CD4-positive, alpha-beta memory T cell (primary cell): ENCODE measurements at regions of chr18 and their contacts with region 1.

Region 1: GRCh38 chr18:23032030-23032582 is 99.0 kb downstream of the RBBP8 start:
- DNase-seq: no peak
- H3K4me3 ChIP-seq: no peak overlapping the region
- H3K4me3 Mint-ChIP-seq: no peak overlapping the region
- H3K27ac ChIP-seq: no peak overlapping the region
- H3K27ac Mint-ChIP-seq: no peak overlapping the region
- H3K4me1 ChIP-seq: no peaks in the 10 kb centered on the region
- H3K4me1 Mint-ChIP-seq: peaks cover 0 to 3% (median 0%) of the 10 kb centered on the region in 4 donors
- H3K27me3 ChIP-seq: no peaks in the 10 kb centered on the region
- H3K27me3 Mint-ChIP-seq: no peaks in the 10 kb centered on the region

Region 2: DNA sequence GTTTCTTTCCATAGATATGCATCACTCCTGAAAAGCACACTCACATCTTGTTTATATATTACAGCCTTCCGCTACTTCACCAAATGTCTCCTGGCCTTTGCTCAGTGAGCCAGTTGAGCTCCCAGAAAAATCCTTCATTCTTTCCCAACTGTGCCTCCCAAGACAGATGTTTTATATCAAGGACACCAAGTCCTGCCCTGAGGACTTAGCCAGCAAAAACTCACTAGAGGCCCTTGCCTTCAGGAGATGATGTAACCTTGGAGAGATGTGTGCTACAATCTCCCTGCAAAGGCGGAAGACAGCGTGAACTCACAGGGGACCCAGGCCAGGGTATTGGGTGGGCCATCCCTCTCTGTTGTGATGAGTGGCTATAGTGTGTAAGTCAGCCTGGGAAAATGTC is 528.3 kb before region 1 on chr18:
- CTCF ChIA-PET with region 1: no interaction called
- POLR2A ChIA-PET with region 1: no interaction called
- intact Hi-C with region 1: no loop called
- DNase-seq: no peak
- H3K4me3 ChIP-seq: no peak overlapping the region
- H3K4me3 Mint-ChIP-seq: no peak overlapping the region
- H3K27ac ChIP-seq: no peak overlapping the region
- H3K27ac Mint-ChIP-seq: no peak overlapping the region
- H3K4me1 ChIP-seq: no peaks in the 10 kb centered on the region
- H3K4me1 Mint-ChIP-seq: no peaks in the 10 kb centered on the region
- H3K27me3 ChIP-seq: no peaks in the 10 kb centered on the region
- H3K27me3 Mint-ChIP-seq: no peaks in the 10 kb centered on the region

Region 3: GRCh38 chr18:23356915-23357601 is 325.0 kb after region 1 on chr18:
- CTCF ChIA-PET with region 1: interaction called, 25 read pairs
- POLR2A ChIA-PET with region 1: no interaction called
- intact Hi-C with region 1: loop called (anchors 5 kb)
- DNase-seq: no peak
- H3K4me3 ChIP-seq: no peak overlapping the region
- H3K4me3 Mint-ChIP-seq: no peak overlapping the region
- H3K27ac ChIP-seq: no peak overlapping the region
- H3K27ac Mint-ChIP-seq: no peak overlapping the region
- H3K4me1 ChIP-seq: peaks cover 12% of the 10 kb centered on the region
- H3K4me1 Mint-ChIP-seq: peaks cover 4 to 15% (median 10%) of the 10 kb centered on the region in 4 donors
- H3K27me3 ChIP-seq: no peaks in the 10 kb centered on the region
- H3K27me3 Mint-ChIP-seq: no peaks in the 10 kb centered on the region

Region 4: GRCh38 chr18:23377669-23378301 is 345.7 kb after region 1 on chr18:
- CTCF ChIA-PET with region 1: interaction called, 24 read pairs
- POLR2A ChIA-PET with region 1: no interaction called
- intact Hi-C with region 1: loop called (anchors 2 kb)
- DNase-seq: no peak
- H3K4me3 ChIP-seq: no peak overlapping the region
- H3K4me3 Mint-ChIP-seq: no peak overlapping the region
- H3K27ac ChIP-seq: no peak overlapping the region
- H3K27ac Mint-ChIP-seq: no peak overlapping the region
- H3K4me1 ChIP-seq: no peaks in the 10 kb centered on the region
- H3K4me1 Mint-ChIP-seq: peaks cover 0 to 2% (median 0%) of the 10 kb centered on the region in 4 donors
- H3K27me3 ChIP-seq: no peaks in the 10 kb centered on the region
- H3K27me3 Mint-ChIP-seq: no peaks in the 10 kb centered on the region

Region 5: GRCh38 chr18:23412351-23412964 is 380.4 kb after region 1 on chr18:
- CTCF ChIA-PET with region 1: interaction called, 53 read pairs
- POLR2A ChIA-PET with region 1: no interaction called
- intact Hi-C with region 1: loop called (anchors 1 kb)
- DNase-seq: no peak
- H3K4me3 ChIP-seq: no peak overlapping the region
- H3K4me3 Mint-ChIP-seq: no peak overlapping the region
- H3K27ac ChIP-seq: no peak overlapping the region
- H3K27ac Mint-ChIP-seq: no peak overlapping the region
- H3K4me1 ChIP-seq: no peaks in the 10 kb centered on the region
- H3K4me1 Mint-ChIP-seq: peaks cover 0 to 1% (median 0%) of the 10 kb centered on the region in 4 donors
- H3K27me3 ChIP-seq: no peaks in the 10 kb centered on the region
- H3K27me3 Mint-ChIP-seq: no peaks in the 10 kb centered on the region

Region 6: GRCh38 chr18:23422672-23423418 is 390.7 kb after region 1 on chr18:
- CTCF ChIA-PET with region 1: no interaction called
- POLR2A ChIA-PET with region 1: no interaction called
- intact Hi-C with region 1: no loop called
- DNase-seq: no peak
- H3K4me3 ChIP-seq: no peak overlapping the region
- H3K4me3 Mint-ChIP-seq: no peak overlapping the region
- H3K27ac ChIP-seq: no peak overlapping the region
- H3K27ac Mint-ChIP-seq: no peak overlapping the region
- H3K4me1 ChIP-seq: no peaks in the 10 kb centered on the region
- H3K4me1 Mint-ChIP-seq: no peaks in the 10 kb centered on the region
- H3K27me3 ChIP-seq: no peaks in the 10 kb centered on the region
- H3K27me3 Mint-ChIP-seq: no peaks in the 10 kb centered on the region